OCI-LY7 (cell line): ENCODE measurements at regions of chr4 and their contacts with region 1.

Region 1: GRCh38 chr4:498328-498904 is 540 bp downstream of the ZNF721 start:
- DNase-seq: no peak
- H3K4me3 ChIP-seq: peak overlapping the region; percentile 96
- H3K27ac ChIP-seq: peak overlapping the region; percentile 50
- H3K4me1 ChIP-seq: peaks cover 13% of the 10 kb centered on the region
- CTCF ChIP-seq: no peak

Region 2: GRCh38 chr4:445410-445809 is 53.0 kb before region 1 on chr4:
- CTCF ChIA-PET with region 1: no interaction called
- POLR2A ChIA-PET with region 1: no interaction called
- intact Hi-C with region 1: loop called (anchors 2 kb)
- DNase-seq: no peak
- H3K4me3 ChIP-seq: no peak overlapping the region
- H3K27ac ChIP-seq: no peak overlapping the region
- H3K4me1 ChIP-seq: no peaks in the 10 kb centered on the region
- CTCF ChIP-seq: no peak

Region 3: DNA sequence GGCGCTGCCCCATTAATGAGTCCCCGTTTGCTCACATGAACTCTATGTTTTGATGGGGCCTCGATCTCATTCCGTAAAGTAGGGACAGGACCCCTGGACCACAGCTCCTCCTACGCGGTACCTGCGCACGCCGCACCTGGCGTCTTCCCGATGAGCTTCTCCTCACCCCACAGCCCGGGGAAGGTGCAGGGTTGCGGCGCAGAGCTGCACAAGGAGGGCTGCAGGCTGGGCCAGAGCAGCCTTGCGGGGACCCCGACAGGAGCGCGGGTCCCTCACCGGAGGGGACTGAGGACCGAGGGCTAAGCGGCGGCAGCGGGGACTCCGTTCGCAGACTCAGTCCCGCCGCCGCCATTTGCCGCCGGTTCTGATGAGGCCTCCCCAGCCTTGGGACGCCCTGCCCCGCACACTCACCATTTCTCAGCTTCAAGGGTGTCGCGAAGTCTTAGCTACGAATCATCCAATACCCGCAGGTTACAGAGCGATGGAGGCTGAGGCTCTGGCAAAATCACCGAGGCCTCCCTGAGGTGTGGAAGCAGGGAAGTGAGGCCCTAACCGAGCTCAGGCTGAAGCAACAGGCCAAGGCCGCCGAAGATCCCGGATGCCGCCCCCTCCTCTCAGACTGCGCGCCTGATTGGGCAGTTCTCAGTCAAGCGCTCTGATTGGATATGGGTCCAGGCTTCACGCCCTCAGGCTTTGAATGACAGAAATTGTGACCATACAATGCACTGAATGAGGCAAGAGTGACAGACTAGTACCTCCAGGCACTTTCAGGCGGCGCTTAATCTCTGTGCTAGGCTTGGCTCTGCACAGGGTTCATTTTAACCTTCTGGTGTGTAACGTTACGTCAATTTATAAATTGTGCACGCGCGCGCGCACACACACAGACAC is 24.6 kb before region 1 on chr4:
- CTCF ChIA-PET with region 1: no interaction called
- POLR2A ChIA-PET with region 1: interaction called, 8 read pairs
- intact Hi-C with region 1: loop called (anchors 1 kb)
- DNase-seq: peak; percentile 99
- H3K4me3 ChIP-seq: peak overlapping the region; percentile 91
- H3K27ac ChIP-seq: peak overlapping the region; percentile 90
- H3K4me1 ChIP-seq: peaks cover 30% of the 10 kb centered on the region
- CTCF ChIP-seq: no peak